Adrenal gland (tissue), 19 donors: ENCODE measurements at regions of chr2 and their contacts with region 1.

Region 1: GRCh38 chr2:68434981-68435380 is 32.1 kb downstream of the FBXO48 start:
- DNase-seq: no peak
- H3K4me3 ChIP-seq: no peak overlapping the region
- H3K27ac ChIP-seq: no peak overlapping the region
- H3K4me1 ChIP-seq: peaks cover 0 to 6% of the 10 kb centered on the region in 2 donors
- H3K27me3 ChIP-seq: no peaks in the 10 kb centered on the region
- CTCF ChIP-seq: no peak
- POLR2A ChIP-seq: no peak

Region 2: GRCh38 chr2:68031542-68032160 is 403.3 kb before region 1 on chr2:
- intact Hi-C with region 1: no loop called
- DNase-seq: no peak
- H3K4me3 ChIP-seq: no peak overlapping the region
- H3K27ac ChIP-seq: no peak overlapping the region
- H3K4me1 ChIP-seq: no peaks in the 10 kb centered on the region
- H3K27me3 ChIP-seq: no peaks in the 10 kb centered on the region
- CTCF ChIP-seq: peak; percentile 44 to 79 (median 70)
- POLR2A ChIP-seq: no peak

Region 3: GRCh38 chr2:68362069-68362468 is 72.9 kb before region 1 on chr2:
- intact Hi-C with region 1: loop called (anchors 5 to 10 kb)
- DNase-seq: peak; percentile 47 to 87 (median 70)
- H3K4me3 ChIP-seq: no peak overlapping the region
- H3K27ac ChIP-seq: peak overlapping the region in 1 of 5 donors; percentile 27
- H3K4me1 ChIP-seq: peaks cover 0 to 4% of the 10 kb centered on the region in 2 donors
- H3K27me3 ChIP-seq: no peaks in the 10 kb centered on the region
- CTCF ChIP-seq: peak; percentile 45 to 89 (median 80)
- POLR2A ChIP-seq: no peak